Endothelial cell of umbilical vein (primary cell): ENCODE measurements at regions of chr11 and their contacts with region 1.

Region 1: DNA sequence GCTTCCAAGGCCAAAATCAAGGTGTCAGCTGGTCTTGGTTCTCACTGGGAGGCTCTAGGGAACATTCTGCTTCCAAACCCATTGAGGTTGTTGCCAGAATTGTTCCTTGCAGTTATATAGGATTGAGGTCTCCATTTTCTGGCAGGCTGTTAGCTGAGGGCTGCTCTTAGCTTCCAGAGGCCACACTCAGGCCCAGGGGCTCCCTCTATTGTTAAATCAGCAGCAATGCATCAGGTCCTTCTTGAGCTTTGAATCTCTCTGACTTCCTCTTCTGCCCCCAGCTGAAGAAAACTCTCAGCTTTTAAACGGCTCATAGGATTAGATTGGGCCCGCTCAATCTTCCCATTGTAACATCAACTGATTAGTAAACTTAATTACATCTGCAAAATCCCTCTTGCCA is 39.3 kb upstream of the BSX start:
- DNase-seq: peak; percentile 32
- H3K4me3 ChIP-seq: no peak overlapping the region
- H3K27ac ChIP-seq: no peak overlapping the region
- H3K4me1 ChIP-seq: no peaks in the 10 kb centered on the region
- H3K27me3 ChIP-seq: peaks cover 3 to 16% of the 10 kb centered on the region in 2 experiments
- CTCF ChIP-seq: peak; percentile 57 to 76
- POLR2A ChIP-seq: no peak

Region 2: DNA sequence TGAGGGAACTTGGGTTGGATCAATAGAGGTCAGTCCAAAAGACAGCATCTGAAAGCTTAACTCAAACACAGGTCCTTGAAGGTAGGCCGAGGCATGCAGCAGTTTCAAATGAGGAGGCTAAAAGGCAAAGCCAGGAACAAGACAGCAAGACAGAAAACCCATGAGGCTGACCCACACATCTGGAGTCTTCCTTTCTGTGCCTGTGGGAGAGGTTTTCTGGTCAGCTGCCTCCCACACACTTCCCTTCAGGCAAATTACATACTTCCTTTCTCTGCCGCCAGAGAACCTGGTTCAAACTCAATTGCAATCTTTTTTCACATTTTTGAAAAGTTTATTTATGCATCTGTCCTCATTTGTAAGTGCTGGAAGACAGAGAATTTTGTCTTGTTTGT is 212.5 kb before region 1 on chr11:
- CTCF ChIA-PET with region 1: interaction called, 3 read pairs
- POLR2A ChIA-PET with region 1: no interaction called
- dilution Hi-C with region 1: no loop called
- intact Hi-C with region 1: loop called (anchors 5 kb)
- DNase-seq: peak; percentile 42
- H3K4me3 ChIP-seq: no peak overlapping the region
- H3K27ac ChIP-seq: no peak overlapping the region
- H3K4me1 ChIP-seq: no peaks in the 10 kb centered on the region
- H3K27me3 ChIP-seq: no peaks in the 10 kb centered on the region
- CTCF ChIP-seq: no peak
- POLR2A ChIP-seq: no peak

Region 3: GRCh38 chr11:122869622-122870021 is 151.3 kb before region 1 on chr11:
- CTCF ChIA-PET with region 1: interaction called, 621 read pairs
- POLR2A ChIA-PET with region 1: no interaction called
- dilution Hi-C with region 1: loop called (anchors 10 kb)
- intact Hi-C with region 1: no loop called
- DNase-seq: no peak
- H3K4me3 ChIP-seq: no peak overlapping the region
- H3K27ac ChIP-seq: no peak overlapping the region
- H3K4me1 ChIP-seq: no peaks in the 10 kb centered on the region
- H3K27me3 ChIP-seq: peaks cover 0 to 2% of the 10 kb centered on the region in 2 experiments
- CTCF ChIP-seq: no peak
- POLR2A ChIP-seq: no peak

Region 4: DNA sequence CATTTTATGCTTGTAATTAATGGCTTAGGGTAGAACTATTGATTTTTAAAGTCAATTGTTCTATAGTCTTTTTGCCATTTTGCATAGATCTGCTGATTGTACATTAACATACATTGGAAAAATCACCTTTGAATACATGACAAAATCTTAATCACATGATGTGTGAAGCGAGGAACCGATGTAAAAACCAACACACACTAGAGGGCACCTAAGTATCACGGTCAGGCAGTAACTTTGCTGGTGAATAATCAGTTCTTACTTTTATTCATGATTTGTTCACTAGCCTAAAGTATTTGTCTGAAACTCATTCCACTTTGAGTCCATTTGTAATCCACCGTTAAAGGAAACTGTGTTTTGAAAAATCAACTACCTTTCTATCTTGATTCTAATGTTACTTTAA is 110.2 kb before region 1 on chr11:
- CTCF ChIA-PET with region 1: interaction called, 31 read pairs
- POLR2A ChIA-PET with region 1: no interaction called
- dilution Hi-C with region 1: no loop called
- intact Hi-C with region 1: loop called (anchors 1 kb)
- DNase-seq: peak; percentile 36
- H3K4me3 ChIP-seq: no peak overlapping the region
- H3K27ac ChIP-seq: no peak overlapping the region
- H3K4me1 ChIP-seq: peaks cover 3% of the 10 kb centered on the region
- H3K27me3 ChIP-seq: no peaks in the 10 kb centered on the region
- CTCF ChIP-seq: peak in 1 of 2 donors; percentile 8
- POLR2A ChIP-seq: no peak

Region 5: DNA sequence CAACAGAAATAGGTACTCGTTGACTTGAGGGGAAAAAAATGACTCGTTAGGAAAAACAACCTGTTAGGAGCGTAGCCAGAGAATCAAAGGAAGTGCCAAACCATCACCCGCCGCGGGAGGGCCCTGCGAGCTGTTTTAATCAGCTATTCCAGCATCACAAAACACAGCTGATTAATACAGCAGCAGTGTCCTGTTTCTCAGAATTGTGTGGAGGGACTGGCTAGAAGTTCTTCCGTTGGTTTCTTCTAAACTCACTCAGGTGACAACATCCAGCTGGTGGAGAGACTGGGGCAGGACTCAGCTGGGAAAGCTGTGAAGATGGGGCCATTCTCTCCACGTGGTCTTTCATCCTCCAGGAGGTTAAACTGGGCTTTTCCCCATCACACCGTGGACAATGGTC is 12.9 kb after region 1 on chr11:
- CTCF ChIA-PET with region 1: interaction called, 51 read pairs
- POLR2A ChIA-PET with region 1: no interaction called
- dilution Hi-C with region 1: no loop called
- intact Hi-C with region 1: no loop called
- DNase-seq: peak; percentile 32
- H3K4me3 ChIP-seq: no peak overlapping the region
- H3K27ac ChIP-seq: no peak overlapping the region
- H3K4me1 ChIP-seq: no peaks in the 10 kb centered on the region
- H3K27me3 ChIP-seq: peaks cover 0 to 3% of the 10 kb centered on the region in 2 experiments
- CTCF ChIP-seq: peak; percentile 13 to 36
- POLR2A ChIP-seq: no peak

Region 6: GRCh38 chr11:123054301-123055065 is 33.5 kb after region 1 on chr11:
- CTCF ChIA-PET with region 1: interaction called, 78 read pairs
- POLR2A ChIA-PET with region 1: no interaction called
- dilution Hi-C with region 1: no loop called
- intact Hi-C with region 1: loop called (anchors 1 kb)
- DNase-seq: peak; percentile 68
- H3K4me3 ChIP-seq: no peak overlapping the region
- H3K27ac ChIP-seq: no peak overlapping the region
- H3K4me1 ChIP-seq: peaks cover 13% of the 10 kb centered on the region
- H3K27me3 ChIP-seq: no peaks in the 10 kb centered on the region
- CTCF ChIP-seq: peak; percentile 62 to 65
- POLR2A ChIP-seq: peak; percentile 50

Region 7: DNA sequence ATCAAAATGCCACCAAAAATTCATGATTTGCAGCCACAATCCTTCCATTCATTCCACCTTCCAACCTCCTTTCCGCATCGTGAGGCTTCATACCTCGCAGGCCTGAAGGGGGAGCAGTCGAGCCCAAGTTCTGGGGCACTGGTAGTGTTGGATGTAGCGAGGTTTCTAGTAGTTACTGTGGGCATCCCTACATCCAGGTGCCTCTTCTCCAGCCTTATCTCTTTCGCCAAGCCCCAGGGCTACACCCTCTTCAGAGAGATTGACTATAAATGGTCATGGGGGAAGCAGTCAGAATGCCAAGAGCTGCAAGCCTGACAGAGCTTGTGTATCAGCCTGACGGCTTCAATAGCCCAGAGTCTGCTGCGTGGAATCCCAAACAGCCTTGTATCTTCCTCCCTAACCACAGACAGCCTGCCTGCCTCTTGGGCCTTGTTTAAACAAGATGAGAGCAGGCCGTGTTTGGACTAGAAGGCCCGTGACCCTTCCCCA is 145.1 kb after region 1 on chr11:
- CTCF ChIA-PET with region 1: no interaction called
- POLR2A ChIA-PET with region 1: no interaction called
- dilution Hi-C with region 1: no loop called
- intact Hi-C with region 1: no loop called
- DNase-seq: no peak
- H3K4me3 ChIP-seq: no peak overlapping the region
- H3K27ac ChIP-seq: no peak overlapping the region
- H3K4me1 ChIP-seq: no peaks in the 10 kb centered on the region
- H3K27me3 ChIP-seq: peaks cover 0 to 1% of the 10 kb centered on the region in 2 experiments
- CTCF ChIP-seq: peak; percentile 49 to 53
- POLR2A ChIP-seq: no peak